Thyroid gland (tissue), 4 donors: ENCODE measurements at regions of chr3 and their contacts with region 1.

Region 1: DNA sequence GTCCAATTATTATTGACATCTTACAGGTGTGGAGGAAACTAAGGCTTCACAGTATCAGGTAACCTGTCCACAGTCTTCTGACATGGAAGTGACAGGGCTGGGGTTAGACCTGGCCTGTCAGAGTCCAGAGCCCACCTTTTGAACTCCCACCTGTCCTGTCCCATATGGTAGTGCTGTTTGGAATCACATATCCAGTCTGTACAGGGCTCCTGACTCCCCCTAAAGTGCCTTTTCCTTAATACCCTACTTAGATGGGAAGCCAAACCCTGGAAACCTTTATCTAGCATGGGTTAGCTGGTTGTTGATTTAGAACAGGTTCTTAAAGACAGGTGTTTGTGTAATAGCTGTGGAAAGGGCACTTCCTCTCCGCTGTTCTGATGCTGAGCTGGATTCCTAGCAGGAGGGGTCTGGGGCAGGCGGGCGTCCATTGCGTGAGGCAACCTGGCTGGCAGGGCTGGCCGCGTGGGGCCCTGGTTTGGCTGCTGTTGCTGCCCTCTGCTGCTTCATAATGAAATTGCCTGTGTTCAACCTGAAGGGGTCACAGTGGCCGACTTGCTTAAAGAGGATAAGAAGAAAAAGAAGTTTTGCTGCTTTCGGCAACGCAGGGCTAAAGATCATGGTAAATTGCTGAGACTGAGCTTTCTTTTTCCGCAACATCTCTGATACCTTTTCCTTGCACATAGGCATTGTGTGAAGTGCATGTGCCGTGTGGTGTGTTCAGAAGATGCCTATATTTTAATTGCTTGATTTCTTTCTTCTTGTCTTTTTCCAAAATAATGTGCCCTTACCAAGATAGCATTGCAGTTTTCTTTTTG is 136.2 kb downstream of the CHDH start:
- DNase-seq: peak; percentile 80 to 84
- H3K4me3 ChIP-seq: no peak overlapping the region
- H3K27ac ChIP-seq: no peak overlapping the region
- H3K4me1 ChIP-seq: peaks cover 0 to 13% of the 10 kb centered on the region in 2 donors
- H3K27me3 ChIP-seq: no peaks in the 10 kb centered on the region
- CTCF ChIP-seq: peak; percentile 65 to 89 (median 84)
- POLR2A ChIP-seq: no peak

Region 2: DNA sequence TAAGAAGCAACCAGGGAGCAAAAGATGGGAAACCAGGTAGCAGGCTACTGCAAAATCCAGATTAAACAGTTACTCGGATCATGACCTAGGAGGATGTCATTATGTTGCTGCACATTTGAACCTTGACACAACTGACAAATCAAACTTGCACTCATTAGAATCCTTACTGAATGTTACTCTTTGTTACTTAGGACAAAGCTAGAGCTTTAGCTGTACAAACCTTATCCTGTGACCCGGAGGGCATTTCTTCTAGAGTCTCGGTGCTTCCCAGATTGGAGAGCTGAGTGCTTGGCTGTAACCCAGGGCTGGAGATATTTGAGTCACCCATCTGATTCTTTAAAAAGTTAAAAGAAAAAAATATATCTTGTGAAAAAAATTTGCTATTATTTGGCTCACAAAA is 406.1 kb before region 1 on chr3:
- intact Hi-C with region 1: loop called (anchors 5 kb)
- DNase-seq: peak; percentile 74 to 77
- H3K4me3 ChIP-seq: no peak overlapping the region
- H3K27ac ChIP-seq: peak overlapping the region; percentile 33 to 44 (median 39)
- H3K4me1 ChIP-seq: peaks cover 0 to 14% of the 10 kb centered on the region in 2 donors
- H3K27me3 ChIP-seq: no peaks in the 10 kb centered on the region
- CTCF ChIP-seq: no peak
- POLR2A ChIP-seq: no peak

Region 3: GRCh38 chr3:53361852-53362251 is 348.2 kb before region 1 on chr3:
- intact Hi-C with region 1: no loop called
- DNase-seq: no peak
- H3K4me3 ChIP-seq: no peak overlapping the region
- H3K27ac ChIP-seq: no peak overlapping the region
- H3K4me1 ChIP-seq: no peaks in the 10 kb centered on the region
- H3K27me3 ChIP-seq: no peaks in the 10 kb centered on the region
- CTCF ChIP-seq: no peak
- POLR2A ChIP-seq: no peak

Region 4: GRCh38 chr3:53375019-53375418 is 335.0 kb before region 1 on chr3:
- intact Hi-C with region 1: loop called (anchors 5 kb)
- DNase-seq: peak; percentile 67 to 79
- H3K4me3 ChIP-seq: no peak overlapping the region
- H3K27ac ChIP-seq: no peak overlapping the region
- H3K4me1 ChIP-seq: no peaks in the 10 kb centered on the region
- H3K27me3 ChIP-seq: no peaks in the 10 kb centered on the region
- CTCF ChIP-seq: peak; percentile 45 to 98 (median 78)
- POLR2A ChIP-seq: no peak